Heart right ventricle (tissue), 16 donors: ENCODE measurements at regions of chr15 and their contacts with region 1.

Region 1: GRCh38 chr15:55649054-55649423 is 60.9 kb upstream of the PYGO1 start:
- DNase-seq: no peak
- ATAC-seq: no peak
- H3K4me3 ChIP-seq: no peak overlapping the region
- H3K27ac ChIP-seq: no peak overlapping the region
- H3K4me1 ChIP-seq: no peaks in the 10 kb centered on the region
- H3K27me3 ChIP-seq: no peaks in the 10 kb centered on the region
- CTCF ChIP-seq: no peak

Region 2: DNA sequence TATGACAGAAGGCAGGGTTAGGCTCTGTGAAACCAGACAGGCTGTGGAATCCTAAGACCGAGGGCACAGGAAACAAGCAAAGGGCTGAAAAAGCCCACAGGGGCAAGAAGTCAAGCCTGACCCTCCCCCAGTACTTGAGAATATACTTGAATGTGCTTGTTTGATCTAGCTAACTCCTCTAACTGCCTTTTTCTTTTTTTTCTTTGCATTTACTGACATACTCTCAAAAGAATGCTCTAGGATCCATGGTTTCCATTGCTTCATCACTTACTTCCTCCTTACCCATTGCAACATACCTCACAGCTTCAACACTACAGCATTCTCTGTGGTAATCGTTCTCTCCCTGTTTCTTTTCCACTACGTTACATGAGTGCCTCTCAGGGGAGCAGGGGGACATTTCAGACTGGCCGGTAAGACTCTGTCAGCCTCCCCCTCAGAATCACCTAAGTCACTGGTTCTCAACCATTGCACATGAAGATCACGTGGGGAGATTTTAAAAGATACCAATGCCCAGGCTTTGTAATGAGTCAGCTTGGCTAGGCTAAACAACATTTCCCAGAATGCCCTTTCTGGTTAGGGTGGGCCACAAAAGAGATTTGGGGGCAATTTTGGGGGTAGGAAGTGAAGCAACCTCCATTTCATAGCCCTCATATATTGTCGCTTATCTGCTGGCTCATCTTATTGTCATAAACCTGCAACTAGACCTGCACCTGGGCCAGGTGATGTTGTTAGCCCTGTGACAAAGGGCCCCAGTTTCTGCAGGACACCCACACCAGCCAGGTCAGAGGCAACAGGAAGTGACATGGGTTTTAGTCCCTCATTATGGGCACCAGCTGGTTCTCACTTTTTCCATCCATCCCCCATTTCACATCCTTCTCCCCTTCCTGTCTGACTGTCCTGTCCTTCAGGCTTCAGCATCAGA is 427.7 kb before region 1 on chr15:
- intact Hi-C with region 1: loop called in 2 of 10 experiments (anchors 5 to 10 kb)
- DNase-seq: no peak
- ATAC-seq: peak in 7 of 8 donors; percentile 38 to 87 (median 67)
- H3K4me3 ChIP-seq: peak overlapping the region in 1 of 10 donors; percentile 18
- H3K27ac ChIP-seq: peak overlapping the region in 3 of 10 donors; percentile 10 to 91 (median 48)
- H3K4me1 ChIP-seq: peaks cover 0 to 78% (median 0%) of the 10 kb centered on the region in 9 donors
- H3K27me3 ChIP-seq: no peaks in the 10 kb centered on the region
- CTCF ChIP-seq: no peak

Region 3: GRCh38 chr15:55526559-55527036 is 122.4 kb before region 1 on chr15:
- intact Hi-C with region 1: loop called in 8 of 10 experiments (anchors 5 to 10 kb)
- DNase-seq: no peak
- ATAC-seq: peak in 4 of 8 donors; percentile 17 to 66 (median 26)
- H3K4me3 ChIP-seq: no peak overlapping the region
- H3K27ac ChIP-seq: no peak overlapping the region
- H3K4me1 ChIP-seq: no peaks in the 10 kb centered on the region
- H3K27me3 ChIP-seq: peaks cover 0 to 14% (median 3%) of the 10 kb centered on the region in 7 donors
- CTCF ChIP-seq: peak in 8 of 9 donors; percentile 25 to 64 (median 55)

Region 4: GRCh38 chr15:55775316-55775715 is 126.3 kb after region 1 on chr15:
- intact Hi-C with region 1: loop called in 1 of 10 experiments (anchors 10 kb)
- DNase-seq: no peak
- ATAC-seq: no peak
- H3K4me3 ChIP-seq: no peak overlapping the region
- H3K27ac ChIP-seq: no peak overlapping the region
- H3K4me1 ChIP-seq: no peaks in the 10 kb centered on the region
- H3K27me3 ChIP-seq: peaks cover 0 to 3% (median 0%) of the 10 kb centered on the region in 7 donors
- CTCF ChIP-seq: no peak

Region 5: DNA sequence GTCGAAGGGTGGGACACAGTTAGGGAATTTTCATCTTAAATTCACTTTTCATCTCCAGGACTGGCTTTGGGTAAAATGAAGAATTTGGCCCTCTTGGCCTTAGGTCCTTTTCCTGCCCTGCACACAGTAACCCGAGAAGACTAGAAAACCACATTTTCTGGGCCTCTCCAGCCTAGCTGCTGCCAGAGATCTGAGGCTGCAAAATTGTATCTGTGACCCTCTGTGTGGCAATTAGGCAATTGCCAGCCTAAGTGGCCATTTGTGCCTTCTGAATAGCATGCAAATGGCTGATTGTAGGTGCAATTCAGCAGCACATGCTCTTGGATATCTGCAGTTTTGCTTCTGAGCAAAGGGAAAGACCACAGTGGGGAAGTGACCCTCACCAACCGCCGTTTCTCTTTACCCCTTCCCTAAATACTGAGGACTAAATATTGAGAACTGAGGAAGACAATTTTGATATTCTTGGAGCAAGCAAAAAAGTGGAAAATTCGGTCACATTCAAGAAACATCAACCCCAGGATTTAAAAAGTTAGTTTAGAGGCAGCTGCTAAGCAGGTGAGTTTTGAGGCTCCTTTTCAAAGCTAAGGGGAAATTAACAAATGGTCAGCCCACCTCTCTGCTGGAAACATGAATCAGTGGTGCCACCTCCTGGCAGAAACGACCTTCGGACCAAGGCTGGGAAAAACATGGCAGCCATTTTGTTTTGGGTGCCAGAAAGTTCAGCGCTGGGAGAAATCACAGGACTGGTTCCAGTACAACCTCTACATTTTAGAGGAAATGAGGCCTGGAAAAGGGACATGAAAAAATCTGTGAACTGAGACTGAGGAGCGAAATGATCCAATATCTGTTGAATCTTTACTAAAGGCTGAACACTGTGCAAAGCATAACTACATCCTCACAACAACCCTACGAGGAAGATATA is 150.5 kb after region 1 on chr15:
- intact Hi-C with region 1: loop called in 4 of 10 experiments (anchors 2 to 5 kb)
- DNase-seq: peak in 1 of 2 donors; percentile 17
- ATAC-seq: no peak
- H3K4me3 ChIP-seq: no peak overlapping the region
- H3K27ac ChIP-seq: no peak overlapping the region
- H3K4me1 ChIP-seq: peaks cover 0 to 2% (median 0%) of the 10 kb centered on the region in 9 donors
- H3K27me3 ChIP-seq: peaks cover 0 to 7% (median 0%) of the 10 kb centered on the region in 7 donors
- CTCF ChIP-seq: peak in 8 of 9 donors; percentile 13 to 66 (median 48)

Region 6: GRCh38 chr15:55846116-55846707 is 197.2 kb after region 1 on chr15:
- intact Hi-C with region 1: loop called (anchors 1 to 5 kb)
- DNase-seq: peak in 1 of 2 donors; percentile 78
- ATAC-seq: peak in 7 of 8 donors; percentile 43 to 68 (median 61)
- H3K4me3 ChIP-seq: no peak overlapping the region
- H3K27ac ChIP-seq: no peak overlapping the region
- H3K4me1 ChIP-seq: no peaks in the 10 kb centered on the region
- H3K27me3 ChIP-seq: no peaks in the 10 kb centered on the region
- CTCF ChIP-seq: peak; percentile 73 to 92 (median 88)

Region 7: DNA sequence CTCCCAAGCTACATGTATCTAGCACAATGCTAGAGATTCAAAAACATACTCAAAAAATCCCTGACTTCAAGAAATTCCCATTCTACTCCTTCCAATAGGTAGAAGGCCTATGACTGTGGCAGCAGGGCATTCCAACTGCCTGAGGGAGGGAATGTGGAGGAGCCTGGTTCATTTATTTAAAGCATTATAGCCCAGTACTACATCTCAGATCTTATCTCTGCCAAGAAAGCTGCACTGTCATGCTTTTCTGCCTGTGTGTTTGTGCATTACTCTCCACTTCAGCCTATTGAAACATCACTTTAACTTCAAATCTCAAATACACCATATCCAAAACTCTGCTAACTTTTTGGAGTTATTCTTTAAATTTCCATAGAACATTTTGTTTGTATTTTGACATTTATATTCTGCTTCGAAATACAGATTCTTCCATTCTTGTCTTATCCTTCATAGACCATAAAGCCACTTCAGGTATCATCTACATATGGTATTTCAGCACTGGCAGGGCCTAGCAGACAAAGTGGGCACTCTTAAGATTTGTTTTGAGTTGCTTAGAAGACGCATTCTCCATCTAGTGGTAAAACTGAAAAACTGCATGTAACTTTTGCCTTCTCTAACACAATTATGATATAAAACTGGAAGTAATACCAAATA is 403.5 kb after region 1 on chr15:
- intact Hi-C with region 1: loop called in 1 of 10 experiments (anchors 10 kb)
- DNase-seq: no peak
- ATAC-seq: no peak
- H3K4me3 ChIP-seq: no peak overlapping the region
- H3K27ac ChIP-seq: no peak overlapping the region
- H3K4me1 ChIP-seq: no peaks in the 10 kb centered on the region
- H3K27me3 ChIP-seq: no peaks in the 10 kb centered on the region
- CTCF ChIP-seq: peak; percentile 60 to 84 (median 76)